ENCODE measurements at regions of chr1 and their contacts with region 1.

Region 1: DNA sequence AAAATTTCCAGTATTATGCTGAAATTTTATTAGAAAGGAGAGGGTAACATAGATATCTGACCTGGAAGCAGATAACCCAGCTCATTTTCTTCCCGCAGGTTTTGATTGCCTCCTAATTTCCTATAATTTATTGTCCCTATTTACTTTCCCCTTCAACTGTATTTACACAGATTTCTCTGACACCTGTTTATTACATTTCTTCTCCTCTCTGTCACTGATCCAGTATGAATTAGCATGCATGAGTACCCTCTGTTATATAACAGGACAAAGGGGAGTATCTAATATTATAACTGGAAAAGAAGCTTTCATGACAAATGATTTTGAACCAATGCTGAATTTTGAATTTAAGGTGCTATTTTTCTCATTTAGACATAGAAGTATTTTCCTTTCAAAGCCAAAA is 37.4 kb downstream of the DENND1B start:
- DNase-seq: no peak

Region 2: DNA sequence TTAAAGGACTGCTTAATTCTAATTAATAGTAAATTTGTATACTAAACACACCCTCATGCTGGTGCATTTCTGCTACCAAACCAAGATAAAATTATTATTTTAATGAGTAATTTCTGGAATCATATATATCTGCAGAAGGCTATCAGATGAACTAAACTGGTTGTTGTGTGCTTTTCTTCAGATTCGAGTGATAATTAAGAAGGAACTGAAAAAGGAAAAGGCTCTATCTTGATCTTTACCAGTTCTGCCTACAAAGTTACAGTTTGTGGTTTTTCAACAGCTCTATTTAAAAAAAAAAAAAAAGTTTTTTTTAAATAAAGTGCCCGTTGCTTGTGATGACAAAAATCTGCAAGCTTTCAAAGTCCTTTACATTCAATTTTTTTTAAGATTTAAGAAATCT is 23.7 kb after region 1 on chr1:
- intact Hi-C with region 1: loop called (anchors 1 kb)
- DNase-seq: no peak

Region 3: DNA sequence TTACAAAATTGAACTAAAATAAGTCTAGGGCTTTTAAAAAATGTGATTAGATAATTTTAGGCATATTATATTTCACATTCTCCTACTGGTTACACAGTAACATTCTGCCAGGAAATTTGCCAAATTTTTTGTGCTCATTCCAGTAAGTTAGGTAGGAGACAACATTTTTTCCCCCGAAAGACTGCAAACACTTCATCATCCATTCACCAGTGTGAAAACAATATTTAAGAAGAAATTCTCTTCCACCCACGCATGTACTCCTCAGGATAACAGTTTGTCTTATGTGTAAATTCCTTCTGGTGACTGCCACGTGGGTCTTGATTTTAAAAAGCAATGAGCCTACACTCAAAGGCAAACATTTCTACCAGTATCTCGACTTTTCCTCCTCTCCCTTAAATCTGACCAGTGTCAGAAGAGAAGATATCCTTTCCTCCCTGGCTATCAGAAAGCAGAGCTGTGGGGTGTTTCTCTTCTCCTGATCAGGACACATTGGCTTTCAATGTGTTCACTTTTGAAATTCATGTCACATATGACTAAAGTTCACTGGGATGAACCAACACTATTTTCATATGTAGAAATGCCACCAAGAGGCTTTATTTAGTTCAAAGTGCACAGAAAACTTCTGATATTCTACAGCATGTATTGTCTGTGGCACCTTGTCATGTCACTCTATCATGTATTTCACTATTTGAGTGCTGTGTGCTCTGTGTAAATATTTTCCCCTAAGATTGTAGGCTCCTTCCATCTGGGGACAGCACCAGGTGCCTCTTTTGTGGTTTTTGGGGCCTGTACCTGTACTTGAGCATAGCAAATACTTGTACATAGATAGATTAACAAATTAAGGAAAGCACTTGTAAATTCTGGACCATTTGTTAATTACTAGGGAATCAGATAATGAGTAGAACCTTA is 217.8 kb after region 1 on chr1:
- intact Hi-C with region 1: no loop called
- DNase-seq: no peak

Measured in cardiac septum (tissue), 1 donor.